Ovary (tissue), 10 donors: ENCODE measurements at regions of chr10 and their contacts with region 1.

Region 1: GRCh38 chr10:26367771-26368170 is 70.4 kb upstream of the APBB1IP start:
- DNase-seq: no peak
- H3K4me3 ChIP-seq: no peak overlapping the region
- H3K27ac ChIP-seq: no peak overlapping the region
- H3K4me1 ChIP-seq: no peaks in the 10 kb centered on the region
- H3K27me3 ChIP-seq: no peaks in the 10 kb centered on the region
- CTCF ChIP-seq: no peak
- EP300 ChIP-seq: no peak
- POLR2A ChIP-seq: no peak

Region 2: GRCh38 chr10:26380815-26381214 is 13.0 kb after region 1 on chr10:
- intact Hi-C with region 1: loop called in 1 of 4 experiments (anchors 1 kb)
- DNase-seq: no peak
- H3K4me3 ChIP-seq: no peak overlapping the region
- H3K27ac ChIP-seq: no peak overlapping the region
- H3K4me1 ChIP-seq: no peaks in the 10 kb centered on the region
- H3K27me3 ChIP-seq: no peaks in the 10 kb centered on the region
- CTCF ChIP-seq: no peak
- EP300 ChIP-seq: no peak
- POLR2A ChIP-seq: no peak